ENCODE measurements at regions of chrX and their contacts with region 1.

Region 1: GRCh38 chrX:11533211-11533651 is 132.5 kb downstream of the ARHGAP6 start:
- DNase-seq: no peak
- ATAC-seq: peak; percentile 91

Region 2: DNA sequence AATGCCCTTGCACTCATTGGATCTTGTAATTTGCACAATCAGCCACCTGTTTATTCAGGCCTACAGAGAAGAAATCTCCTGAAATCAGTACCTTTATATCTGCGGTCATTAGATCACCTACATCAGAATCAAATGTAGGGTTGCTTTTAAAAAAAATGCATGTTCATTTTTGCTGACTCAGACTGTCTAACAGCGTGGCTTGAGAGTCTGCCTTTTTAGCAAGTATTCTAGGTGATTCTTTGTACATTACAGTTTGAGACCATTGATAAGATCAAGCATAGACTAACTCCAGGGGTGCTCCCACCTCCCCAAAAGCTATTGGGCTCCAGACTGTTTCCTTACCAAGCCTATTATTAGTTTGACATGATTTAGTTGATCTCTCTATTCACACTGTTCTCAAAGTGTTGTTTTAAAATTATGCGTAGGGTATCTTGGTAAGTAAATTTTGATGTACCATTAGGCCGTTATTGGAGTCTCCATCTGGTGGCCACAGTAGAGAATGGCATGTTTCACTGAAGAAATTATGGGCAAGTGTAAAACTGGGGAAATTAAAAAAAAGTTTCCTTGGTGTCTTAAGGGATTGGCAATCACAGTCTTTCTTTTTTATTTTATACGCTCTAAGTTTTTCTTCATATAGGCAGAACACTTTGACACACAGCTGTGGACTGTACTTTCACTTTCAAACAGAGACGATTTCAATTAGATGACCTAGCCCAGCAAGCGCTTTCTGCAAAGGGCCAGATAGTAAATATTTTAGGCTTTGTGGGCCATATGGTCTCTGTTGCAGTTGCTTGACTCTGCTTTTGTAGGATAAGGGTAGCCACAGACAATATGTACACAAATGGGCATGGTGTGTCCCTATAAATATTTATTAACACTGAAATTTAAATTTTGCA is 191.1 kb after region 1 on chrX:
- intact Hi-C with region 1: loop called (anchors 10 kb)
- DNase-seq: no peak
- ATAC-seq: peak; percentile 55